BJ (cell line): ENCODE measurements at regions of chr15 and their contacts with region 1.

Region 1: GRCh38 chr15:42457445-42458442 is 33.2 kb downstream of the ZNF106 start:
- DNase-seq: peak; percentile 94
- H3K4me3 ChIP-seq: peak overlapping the region; percentile 2; the same call in 1 of the 2 replicates
- H3K27me3 ChIP-seq: no peaks in the 10 kb centered on the region
- CTCF ChIP-seq: 0 out of 2 replicates have a peak, but pooled peaks have one; percentile 1

Region 2: DNA sequence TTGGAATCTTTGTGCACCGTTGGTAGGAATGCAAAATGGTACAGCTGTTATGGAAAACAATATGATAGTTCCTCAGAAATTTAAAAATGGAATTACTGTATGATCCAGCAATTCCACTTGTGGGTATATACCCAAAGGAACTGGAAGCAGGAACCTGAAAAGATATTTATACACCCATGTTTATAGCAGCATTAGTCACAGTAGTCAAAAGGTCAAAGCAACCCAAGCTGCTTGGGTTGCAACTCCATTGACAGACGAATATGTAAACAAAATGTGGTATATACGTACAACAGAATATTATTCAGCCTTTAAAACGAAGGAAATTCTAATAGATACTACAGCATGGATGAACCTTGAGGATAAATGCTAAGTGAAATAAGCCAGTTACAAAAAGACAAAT is 133.4 kb before region 1 on chr15:
- CTCF ChIA-PET with region 1: no interaction called
- POLR2A ChIA-PET with region 1: interaction called, 11 read pairs
- DNase-seq: no peak
- H3K4me3 ChIP-seq: no peak overlapping the region
- H3K27me3 ChIP-seq: no peaks in the 10 kb centered on the region
- CTCF ChIP-seq: no peak

Region 3: DNA sequence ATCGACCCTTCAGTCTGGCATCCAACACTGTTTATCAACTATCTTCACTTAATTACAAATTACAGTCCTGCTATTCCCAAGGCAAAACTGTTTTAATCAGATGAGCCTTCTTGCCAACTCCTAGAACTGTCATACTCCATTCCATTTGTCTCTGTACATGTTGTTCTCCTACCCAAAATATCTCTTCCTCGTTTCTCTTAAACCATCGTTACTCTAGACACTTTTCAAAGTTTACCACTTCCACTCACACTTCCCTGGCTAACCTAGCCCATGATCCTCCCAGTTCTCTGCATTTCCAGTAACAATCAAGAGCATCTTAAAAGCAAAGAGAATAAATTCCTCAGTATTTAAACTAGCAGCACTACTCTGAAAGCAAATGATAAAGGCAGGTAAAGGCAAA is 13.3 kb after region 1 on chr15:
- CTCF ChIA-PET with region 1: interaction called, 11 read pairs
- POLR2A ChIA-PET with region 1: no interaction called
- DNase-seq: no peak
- H3K4me3 ChIP-seq: no peak overlapping the region
- H3K27me3 ChIP-seq: no peaks in the 10 kb centered on the region
- CTCF ChIP-seq: no peak